AG04449 (cell line): ENCODE measurements at regions of chr16 and their contacts with region 1.

Region 1: GRCh38 chr16:4330277-4330874 is 14.5 kb downstream of the GLIS2 start:
- DNase-seq: no peak
- H3K4me3 ChIP-seq: no peak overlapping the region
- CTCF ChIP-seq: peak; percentile 96

Region 2: DNA sequence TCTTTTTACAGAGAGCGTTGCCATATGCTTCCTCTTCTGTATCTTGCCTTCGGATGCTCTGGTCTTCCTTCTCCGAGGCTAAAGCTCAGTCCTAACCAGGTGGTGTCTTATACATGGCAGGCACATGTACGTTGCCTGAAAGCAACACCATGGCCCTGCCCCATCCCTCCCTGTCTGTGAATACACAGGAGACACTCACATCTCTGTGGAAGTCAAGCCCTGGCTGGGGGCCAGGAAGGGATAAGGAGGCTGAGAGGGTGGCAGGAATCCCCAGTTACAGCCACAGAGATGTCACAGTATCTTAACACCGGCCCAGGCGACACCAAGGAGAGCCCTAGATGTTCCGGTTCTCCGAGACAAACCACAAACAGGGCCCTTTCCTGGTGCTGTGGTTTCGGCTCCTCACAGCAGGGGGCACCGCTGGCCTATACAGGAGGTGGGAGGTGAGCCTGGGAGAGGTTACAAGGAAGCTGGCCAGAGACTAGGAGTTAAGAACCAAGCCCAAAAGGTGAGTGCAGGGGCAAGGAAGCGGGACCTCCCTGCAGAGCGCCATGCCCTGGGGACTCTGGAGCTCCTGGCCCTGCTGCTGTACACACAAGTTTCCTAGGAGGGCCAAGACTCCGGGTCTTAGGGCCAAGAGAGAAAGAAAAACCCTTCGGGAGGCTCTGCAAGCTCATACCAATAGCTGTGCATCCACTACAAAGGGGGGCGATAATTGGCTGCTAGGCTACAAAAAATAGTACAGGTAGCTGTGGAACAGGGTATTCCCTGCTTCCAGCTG is 130.2 kb before region 1 on chr16:
- CTCF ChIA-PET with region 1: interaction called, 39 read pairs
- POLR2A ChIA-PET with region 1: no interaction called
- DNase-seq: no peak
- H3K4me3 ChIP-seq: no peak overlapping the region
- CTCF ChIP-seq: peak; percentile 80

Region 3: DNA sequence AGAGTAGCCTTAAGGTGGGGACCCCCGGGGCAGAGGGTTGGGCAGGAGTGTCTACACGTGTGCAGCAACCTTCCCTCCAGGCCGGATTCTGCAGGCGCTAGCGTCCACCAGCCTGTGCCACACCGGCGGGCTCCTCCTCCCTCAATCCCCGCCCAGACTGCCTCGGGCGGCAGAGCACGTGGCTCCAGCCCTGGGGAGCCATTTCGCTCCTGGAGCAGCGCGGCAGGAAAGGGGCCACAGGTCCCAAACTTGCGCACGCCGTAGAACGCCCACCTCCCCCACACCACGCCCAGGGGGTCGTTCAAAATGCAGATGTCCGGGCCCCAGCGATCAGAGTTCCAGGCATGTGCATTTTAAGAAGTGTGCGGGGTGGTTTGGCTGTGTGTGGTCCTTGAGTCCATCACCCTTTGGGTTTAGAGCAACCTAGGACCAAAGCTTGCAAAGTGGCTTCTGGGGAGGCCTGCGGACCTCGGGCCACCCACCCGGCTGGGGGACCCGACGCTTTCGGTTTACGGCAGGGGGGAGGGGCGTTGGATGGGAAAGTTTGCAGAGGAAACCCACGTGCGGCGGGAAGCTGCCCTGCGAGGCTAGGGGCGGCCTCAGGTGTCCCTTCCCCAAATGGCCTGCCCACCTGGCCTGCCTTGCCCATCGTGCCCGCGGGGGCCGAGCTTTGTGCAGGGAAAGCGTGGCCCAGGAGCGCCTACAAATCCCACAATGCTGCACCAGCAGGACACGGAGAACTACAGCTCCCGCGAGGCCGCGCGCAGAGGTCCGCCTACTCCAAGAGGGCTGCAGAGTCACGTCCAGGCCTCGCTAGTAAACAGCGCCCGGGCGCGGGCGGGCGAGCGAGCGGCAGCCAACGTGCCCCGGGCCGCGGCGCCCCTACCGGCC is 59.0 kb before region 1 on chr16:
- CTCF ChIA-PET with region 1: interaction called, 14 read pairs
- POLR2A ChIA-PET with region 1: interaction called, 3 read pairs
- DNase-seq: no peak
- H3K4me3 ChIP-seq: peak overlapping the region; percentile 93
- CTCF ChIP-seq: no peak

Region 4: GRCh38 chr16:4298761-4299522 is 31.4 kb before region 1 on chr16:
- CTCF ChIA-PET with region 1: interaction called, 19 read pairs
- POLR2A ChIA-PET with region 1: no interaction called
- DNase-seq: no peak
- H3K4me3 ChIP-seq: peak overlapping the region; percentile 32
- CTCF ChIP-seq: no peak

Region 5: GRCh38 chr16:4316864-4317531 is 13.4 kb before region 1 on chr16:
- CTCF ChIA-PET with region 1: interaction called, 59 read pairs
- POLR2A ChIA-PET with region 1: no interaction called
- DNase-seq: no peak
- H3K4me3 ChIP-seq: peak overlapping the region; percentile 82
- CTCF ChIP-seq: no peak